ENCODE measurements at regions of chr3 and their contacts with region 1.

Region 1: GRCh38 chr3:172595641-172596393 is 72.6 kb upstream of the TNFSF10 start:
- DNase-seq: peak; percentile 63
- ATAC-seq: peak; percentile 70
- H3K4me3 ChIP-seq: peak overlapping the region; percentile 17 to 35 (median 18); a peak in 4 of 6 replicates
- H3K27ac ChIP-seq: peak overlapping the region; percentile 96
- H3K4me1 ChIP-seq: peaks cover 72% of the 10 kb centered on the region
- H3K27me3 ChIP-seq: no peaks in the 10 kb centered on the region
- CTCF ChIP-seq: peak; percentile 83
- EP300 ChIP-seq: no peak
- POLR2A ChIP-seq: no peak
- RAD21 ChIP-seq: peak; percentile 67

Region 2: DNA sequence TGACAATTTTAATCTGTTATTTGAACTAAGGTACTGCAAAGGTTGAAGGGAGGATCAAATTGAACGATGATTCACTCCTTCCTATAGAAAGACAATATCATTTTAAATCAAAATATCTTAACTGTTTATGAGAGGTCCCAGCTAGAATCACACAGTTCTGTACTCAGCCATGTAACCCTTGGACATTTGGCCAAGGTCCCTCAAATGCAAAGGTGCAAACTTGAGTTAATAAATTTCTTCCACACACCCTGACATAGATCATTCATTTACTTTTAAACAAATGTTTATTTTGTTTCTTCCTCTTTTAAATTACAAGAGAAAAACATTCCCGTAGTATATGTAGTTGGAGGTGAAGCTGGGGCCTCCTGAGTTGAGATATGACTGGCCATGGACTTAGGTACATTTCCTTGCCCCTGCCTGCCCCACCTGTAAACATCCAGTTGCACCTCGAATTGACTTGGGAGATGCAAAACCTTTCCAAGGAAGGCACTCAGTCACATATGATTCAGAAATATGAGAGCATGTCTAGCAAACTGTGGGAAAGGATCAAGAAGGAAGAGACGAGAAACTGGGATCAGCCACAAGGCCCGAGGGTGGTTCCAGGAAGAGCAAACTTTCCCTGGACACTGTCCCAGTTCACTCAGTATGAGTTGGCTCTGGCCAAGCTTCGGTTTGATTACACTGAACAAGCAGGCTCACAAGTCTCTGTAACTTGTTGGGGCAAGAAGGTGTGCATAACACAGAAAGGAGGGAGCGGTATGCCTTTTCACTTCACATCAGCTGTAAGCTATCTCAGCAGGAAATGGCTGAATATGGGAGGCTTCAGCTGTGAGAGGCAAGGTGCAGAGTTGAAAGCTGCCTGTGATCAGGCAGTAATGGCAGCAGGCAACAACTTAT is 79.3 kb before region 1 on chr3:
- CTCF ChIA-PET with region 1: no interaction called
- POLR2A ChIA-PET with region 1: interaction called, 10 read pairs
- in situ Hi-C with region 1: no loop called
- intact Hi-C with region 1: no loop called
- DNase-seq: no peak
- ATAC-seq: peak; percentile 91
- H3K4me3 ChIP-seq: no peak overlapping the region
- H3K27ac ChIP-seq: peak overlapping the region; percentile 64
- H3K4me1 ChIP-seq: peaks cover 53% of the 10 kb centered on the region
- H3K27me3 ChIP-seq: no peaks in the 10 kb centered on the region
- CTCF ChIP-seq: no peak
- EP300 ChIP-seq: peak in 1 of 2 experiments; percentile 52; a peak in 2 of 4 replicates
- POLR2A ChIP-seq: no peak
- RAD21 ChIP-seq: no peak

Region 3: GRCh38 chr3:172522871-172523818 is 72.7 kb before region 1 on chr3 and contains the start of gene TNFSF10:
- CTCF ChIA-PET with region 1: no interaction called
- POLR2A ChIA-PET with region 1: interaction called, 12 read pairs
- in situ Hi-C with region 1: no loop called
- intact Hi-C with region 1: no loop called
- DNase-seq: peak; percentile 37
- ATAC-seq: peak; percentile 96
- H3K4me3 ChIP-seq: peak within 1 kb of the TSS; percentile 64 to 74 (median 70)
- H3K27ac ChIP-seq: peak within 1 kb of the TSS; percentile 80
- H3K4me1 ChIP-seq: peaks cover 41% of the 10 kb centered on the region
- H3K27me3 ChIP-seq: no peaks in the 10 kb centered on the region
- CTCF ChIP-seq: no peak
- EP300 ChIP-seq: no peak
- POLR2A ChIP-seq: peak; percentile 58 to 85
- RAD21 ChIP-seq: no peak
- total RNA-seq, gene TNFSF10: 5.3 and 8.4 TPM in 2 replicates

Region 4: GRCh38 chr3:172553526-172554252 is 42.1 kb before region 1 on chr3:
- CTCF ChIA-PET with region 1: no interaction called
- POLR2A ChIA-PET with region 1: interaction called, 3 read pairs
- in situ Hi-C with region 1: no loop called
- intact Hi-C with region 1: loop called (anchors 2 kb)
- DNase-seq: peak; percentile 94
- ATAC-seq: peak; percentile 98
- H3K4me3 ChIP-seq: peak overlapping the region in 2 of 3 experiments; percentile 6 to 23; a peak in 2 of 6 replicates
- H3K27ac ChIP-seq: peak overlapping the region; percentile 92
- H3K4me1 ChIP-seq: peaks cover 80% of the 10 kb centered on the region
- H3K27me3 ChIP-seq: no peaks in the 10 kb centered on the region
- CTCF ChIP-seq: no peak
- EP300 ChIP-seq: peak; percentile 90 to 97
- POLR2A ChIP-seq: no peak
- RAD21 ChIP-seq: 0 out of 2 replicates have a peak, but pooled peaks have one; percentile 43

Region 5: DNA sequence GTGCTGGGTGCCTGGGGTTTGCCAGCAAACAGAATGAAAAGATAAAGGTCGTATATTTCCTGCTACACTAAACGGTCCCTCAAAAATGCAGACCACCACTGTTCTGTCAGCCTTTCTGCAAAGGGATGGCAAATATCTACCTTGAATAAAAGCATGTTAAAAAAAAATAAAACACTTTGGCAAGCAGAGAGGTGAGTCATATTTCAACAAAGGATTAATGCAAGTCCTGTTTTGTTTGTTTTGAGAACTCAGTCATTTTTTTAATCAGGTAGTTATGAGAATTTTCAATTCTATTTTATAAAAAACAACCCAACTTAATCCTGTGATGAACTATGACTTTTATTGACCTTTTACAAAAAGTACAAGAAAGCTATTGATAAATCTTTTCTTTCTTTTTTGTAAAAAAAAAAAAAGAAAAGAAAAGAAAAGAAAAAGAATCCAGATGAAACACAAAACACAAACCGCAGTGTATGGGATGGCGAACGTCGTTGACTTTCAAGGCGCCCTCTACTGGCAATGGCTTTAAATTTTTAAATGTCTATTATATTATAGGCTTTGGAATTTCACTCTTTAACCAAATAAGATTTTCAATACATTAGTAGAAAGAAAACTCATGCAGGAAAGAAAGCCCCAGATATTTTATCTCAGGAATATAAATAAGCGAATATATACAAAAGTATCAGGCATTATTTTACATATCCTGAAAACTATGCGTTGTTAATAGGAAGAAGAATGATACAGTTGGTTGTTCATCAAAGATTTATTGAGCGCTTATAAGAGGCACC is 27.3 kb after region 1 on chr3:
- CTCF ChIA-PET with region 1: interaction called, 15 read pairs
- POLR2A ChIA-PET with region 1: interaction called, 6 read pairs
- in situ Hi-C with region 1: no loop called
- intact Hi-C with region 1: loop called (anchors 2 kb)
- DNase-seq: no peak
- ATAC-seq: peak; percentile 73
- H3K4me3 ChIP-seq: no peak overlapping the region
- H3K27ac ChIP-seq: no peak overlapping the region
- H3K4me1 ChIP-seq: peaks cover 37% of the 10 kb centered on the region
- H3K27me3 ChIP-seq: no peaks in the 10 kb centered on the region
- CTCF ChIP-seq: peak; percentile 56
- EP300 ChIP-seq: no peak
- POLR2A ChIP-seq: no peak
- RAD21 ChIP-seq: no peak

Measured in HepG2 (cell line).